ENCODE measurements at regions of chr15 and their contacts with region 1.

Region 1: DNA sequence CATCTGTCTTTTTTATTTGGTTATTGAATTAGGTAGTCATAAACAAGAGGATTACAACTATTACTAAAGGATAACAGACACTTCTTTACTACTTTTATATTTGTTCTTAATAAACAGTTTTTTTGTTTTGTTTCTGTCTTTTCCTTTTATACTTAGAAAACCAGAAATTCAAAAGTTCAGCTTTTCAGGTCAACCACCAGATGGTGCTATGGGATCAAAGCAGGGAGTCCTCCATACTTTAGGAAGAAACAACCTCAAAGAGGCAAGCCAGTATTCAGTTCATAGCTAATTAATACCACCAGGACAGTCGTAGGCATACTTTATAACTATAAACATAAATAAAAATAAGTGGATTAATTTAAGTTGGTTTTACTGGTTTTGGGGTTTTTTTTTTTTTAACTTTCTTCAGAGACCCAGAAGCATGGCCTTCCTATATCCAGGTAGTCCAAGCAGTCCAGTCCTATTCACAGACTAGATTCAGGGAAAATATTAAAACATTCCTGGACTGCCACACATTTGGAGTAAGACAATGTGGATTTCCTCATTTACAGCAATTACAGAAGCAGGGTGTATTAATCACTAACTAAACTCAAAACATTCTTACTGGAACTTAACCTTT is 16.0 kb upstream of the EID1 start:
- DNase-seq: no peak
- H3K4me3 ChIP-seq: no peak overlapping the region
- CTCF ChIP-seq: peak in 1 of 3 donors; percentile 22
- POLR2A ChIP-seq: no peak

Region 2: DNA sequence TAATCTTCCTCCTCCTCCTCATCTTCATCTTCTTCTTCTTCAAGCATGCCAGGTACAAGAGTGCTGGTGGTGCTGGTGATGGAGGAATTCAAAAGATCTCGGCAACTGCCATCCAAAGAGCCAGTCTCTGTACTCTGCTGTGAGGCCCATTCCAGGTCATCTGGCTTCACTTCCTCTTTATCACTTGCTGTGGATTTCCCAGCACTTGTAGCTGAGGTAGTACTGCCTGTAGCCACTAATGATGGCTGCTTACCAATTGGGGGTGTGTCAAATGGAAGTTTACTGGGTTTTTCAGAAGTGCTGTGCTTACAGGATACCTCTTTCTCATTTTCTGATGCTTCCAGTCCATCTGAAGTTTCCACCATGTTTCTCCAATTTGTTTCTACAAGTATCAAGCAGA is 130.6 kb after region 1 on chr15:
- intact Hi-C with region 1: no loop called
- DNase-seq: no peak
- H3K4me3 ChIP-seq: no peak overlapping the region
- CTCF ChIP-seq: no peak
- POLR2A ChIP-seq: no peak

Region 3: DNA sequence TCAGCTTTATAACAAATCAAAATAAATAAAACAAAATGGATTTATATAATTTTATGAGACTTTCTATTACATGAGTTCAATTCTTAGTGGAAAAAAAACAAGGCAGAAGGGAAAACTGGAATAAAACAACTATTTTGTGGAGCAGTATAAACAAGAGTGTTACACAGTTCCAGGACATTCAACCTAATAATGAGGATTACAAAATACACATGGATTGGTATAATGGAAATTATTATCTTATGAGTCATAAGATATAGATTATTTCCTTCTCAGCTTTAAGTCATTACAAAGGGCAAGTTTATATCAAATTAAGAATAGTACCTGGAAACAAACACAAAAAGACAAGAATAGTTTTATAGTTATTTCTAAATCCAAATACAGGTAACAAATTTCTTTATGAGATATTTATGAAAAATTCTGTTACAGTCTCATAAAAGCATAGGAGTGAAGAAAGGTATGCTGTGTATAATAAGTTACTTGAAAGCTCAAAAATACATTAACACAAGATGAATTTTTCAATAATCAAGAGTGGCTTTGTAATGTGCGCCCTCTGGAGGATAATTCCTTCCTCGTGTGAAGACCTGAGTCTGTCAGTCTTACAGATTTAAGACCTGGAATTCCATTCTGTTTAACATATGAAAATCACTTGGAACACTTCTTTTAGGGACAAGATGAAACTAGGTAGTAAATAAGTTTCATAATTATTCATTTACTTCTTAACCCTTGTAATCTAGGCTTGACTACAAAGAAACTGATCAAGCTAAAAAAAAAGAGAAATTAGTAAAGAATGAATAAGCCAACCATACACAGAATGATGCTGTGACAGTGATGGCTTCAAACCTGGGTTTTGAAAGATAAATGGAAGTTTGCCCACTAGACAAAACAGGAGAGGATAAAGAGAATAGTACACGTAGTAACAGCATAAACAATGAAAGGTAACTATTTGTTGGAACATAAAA is 284.0 kb after region 1 on chr15:
- intact Hi-C with region 1: loop called (anchors 10 kb)
- DNase-seq: no peak
- H3K4me3 ChIP-seq: no peak overlapping the region
- CTCF ChIP-seq: no peak
- POLR2A ChIP-seq: no peak

Region 4: GRCh38 chr15:50145451-50145872 is 1283.5 kb after region 1 on chr15:
- intact Hi-C with region 1: loop called (anchors 10 kb)
- DNase-seq: no peak
- H3K4me3 ChIP-seq: no peak overlapping the region
- CTCF ChIP-seq: no peak
- POLR2A ChIP-seq: no peak

Measured in lower leg skin (tissue), 4 donors.